Body of pancreas (tissue), 4 donors: ENCODE measurements at regions of chr20 and their contacts with region 1.

Region 1: DNA sequence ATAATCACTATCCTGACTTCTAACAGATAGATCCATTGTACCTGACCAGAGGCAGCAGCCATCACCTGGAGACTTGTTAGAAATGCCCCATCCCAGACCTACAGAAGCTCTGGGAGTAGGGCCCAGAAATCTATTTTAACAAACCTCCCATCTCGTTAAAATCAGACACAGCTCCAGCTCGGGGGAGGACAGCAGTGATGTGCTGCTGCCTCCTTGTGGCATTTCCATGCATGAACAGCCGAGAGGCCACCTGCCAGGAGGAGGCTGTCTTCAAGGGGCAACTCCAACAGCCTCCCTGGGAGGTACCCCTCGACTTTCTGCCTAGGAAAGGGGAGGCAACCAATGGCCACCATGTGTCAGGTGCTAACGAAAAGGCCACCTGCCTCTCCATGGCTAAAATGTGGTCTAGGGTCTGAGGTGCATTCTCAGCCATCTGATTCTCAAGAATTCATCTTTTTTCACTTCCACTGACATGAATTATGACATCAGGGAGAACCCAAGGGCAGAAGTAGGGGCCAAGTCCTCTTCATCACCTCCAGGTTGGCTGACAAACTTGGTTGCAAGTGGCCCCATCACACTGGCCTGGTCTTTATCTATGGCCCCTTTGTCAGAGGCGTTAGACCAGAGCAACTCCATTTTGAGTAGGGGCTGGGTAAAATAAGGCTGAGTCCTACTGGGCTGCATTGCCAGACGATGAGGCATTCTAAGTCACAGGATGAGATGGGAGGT is 12.2 kb upstream of the KCNK15 start:
- DNase-seq: peak; percentile 64 to 70 (median 66)
- ATAC-seq: peak; percentile 41
- H3K4me3 ChIP-seq: no peak overlapping the region
- H3K27ac ChIP-seq: no peak overlapping the region
- H3K4me1 ChIP-seq: no peaks in the 10 kb centered on the region
- H3K27me3 ChIP-seq: no peaks in the 10 kb centered on the region
- CTCF ChIP-seq: peak; percentile 55 to 78 (median 73)
- POLR2A ChIP-seq: no peak

Region 2: GRCh38 chr20:44683263-44684046 is 50.0 kb before region 1 on chr20:
- intact Hi-C with region 1: loop called (anchors 10 kb)
- DNase-seq: peak; percentile 64 to 85 (median 72)
- ATAC-seq: peak; percentile 74
- H3K4me3 ChIP-seq: no peak overlapping the region
- H3K27ac ChIP-seq: no peak overlapping the region
- H3K4me1 ChIP-seq: peaks cover 6% of the 10 kb centered on the region
- H3K27me3 ChIP-seq: no peaks in the 10 kb centered on the region
- CTCF ChIP-seq: peak; percentile 22 to 72 (median 57)
- POLR2A ChIP-seq: no peak